GM12878 (cell line): ENCODE measurements at regions of chr16 and their contacts with region 1.

Region 1: GRCh38 chr16:69465083-69465721 is 40.8 kb downstream of the CYB5B start:
- DNase-seq: peak; percentile 59
- ATAC-seq: peak; percentile 67
- H3K4me3 ChIP-seq: no peak overlapping the region
- H3K27ac ChIP-seq: peak overlapping the region; percentile 12
- H3K4me1 ChIP-seq: peaks cover 55% of the 10 kb centered on the region
- H3K27me3 ChIP-seq: no peaks in the 10 kb centered on the region
- CTCF ChIP-seq: peak in 1 of 3 experiments; percentile 5; a peak in 1 of 6 replicates
- EP300 ChIP-seq: peak in 1 of 2 experiments; percentile 53; a peak in 1 of 4 replicates
- POLR2A ChIP-seq: no peak
- RAD21 ChIP-seq: peak; percentile 35; the same call in 1 of the 2 replicates

Region 2: DNA sequence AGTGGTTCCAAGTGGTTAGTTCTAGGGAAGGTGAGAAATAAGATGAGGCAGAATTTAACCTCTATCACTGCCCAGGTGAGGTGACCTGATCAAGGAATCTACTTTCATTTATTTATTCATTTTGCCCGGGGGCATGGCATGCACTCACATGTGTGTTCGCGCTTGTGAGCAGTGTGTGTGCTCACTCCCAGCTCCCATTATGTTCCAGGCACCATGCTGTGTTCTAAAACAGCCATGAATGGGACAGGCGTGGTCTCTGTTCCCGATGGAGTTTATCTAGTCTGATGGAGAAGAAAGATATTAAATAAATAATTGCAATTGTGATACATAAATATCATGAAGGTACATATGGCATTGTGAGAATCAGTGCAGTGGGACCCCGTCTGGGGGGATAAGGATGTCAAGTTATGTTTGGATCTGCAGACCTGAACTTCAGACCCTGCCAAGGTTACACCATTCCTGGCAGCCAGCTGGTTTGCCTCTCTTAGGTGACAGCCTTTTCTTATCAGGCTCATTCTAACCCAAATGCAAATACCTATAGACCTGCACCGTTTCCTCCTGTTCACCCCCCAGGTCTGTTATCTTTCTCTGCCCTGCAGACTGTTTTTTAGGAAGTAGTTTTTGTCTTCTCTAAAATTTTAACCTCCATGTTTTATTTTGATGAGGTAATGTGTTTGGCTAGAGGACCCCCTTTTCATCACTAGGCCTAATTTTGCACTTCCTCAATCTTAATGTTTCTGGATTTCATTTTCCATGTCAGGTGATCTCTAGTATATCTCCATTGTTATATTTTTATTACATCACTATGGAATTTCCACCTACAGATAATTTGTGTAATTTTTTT is 29.0 kb before region 1 on chr16:
- CTCF ChIA-PET with region 1: interaction called, 3 read pairs
- POLR2A ChIA-PET with region 1: interaction called, 4 read pairs
- RAD21 ChIA-PET with region 1: interaction called, 15 read pairs
- SMC1A ChIA-PET with region 1: interaction called, 14 read pairs
- in situ Hi-C with region 1: no loop called
- intact Hi-C with region 1: loop called (anchors 5 kb)
- DNase-seq: no peak
- ATAC-seq: peak; percentile 34
- H3K4me3 ChIP-seq: no peak overlapping the region
- H3K27ac ChIP-seq: no peak overlapping the region
- H3K4me1 ChIP-seq: peaks cover 39% of the 10 kb centered on the region
- H3K27me3 ChIP-seq: no peaks in the 10 kb centered on the region
- CTCF ChIP-seq: no peak
- EP300 ChIP-seq: no peak
- POLR2A ChIP-seq: no peak
- RAD21 ChIP-seq: no peak

Region 3: DNA sequence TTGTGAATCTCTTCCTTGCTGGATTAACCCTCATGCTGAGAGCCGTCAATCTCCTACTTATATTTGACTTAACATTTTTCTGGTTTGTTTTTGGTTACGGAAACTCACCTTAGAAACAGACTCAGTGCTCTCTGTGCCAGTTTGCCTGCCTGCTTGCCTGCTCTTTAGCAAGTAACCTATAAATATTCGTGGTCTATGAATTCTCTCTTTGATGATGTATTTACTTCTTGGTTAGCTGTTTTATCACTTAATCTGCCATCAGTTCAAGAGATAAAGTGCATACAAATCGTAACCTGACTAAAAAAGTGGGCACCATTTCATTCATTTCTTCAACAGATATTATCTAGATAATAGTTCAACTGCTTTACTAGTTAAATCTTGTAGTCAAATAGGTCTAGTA is 14.0 kb before region 1 on chr16:
- CTCF ChIA-PET with region 1: interaction called, 18 read pairs
- POLR2A ChIA-PET with region 1: interaction called, 9 read pairs
- RAD21 ChIA-PET with region 1: interaction called, 3 read pairs
- SMC1A ChIA-PET with region 1: interaction called, 33 read pairs
- in situ Hi-C with region 1: no loop called
- intact Hi-C with region 1: no loop called
- DNase-seq: no peak
- ATAC-seq: no peak
- H3K4me3 ChIP-seq: no peak overlapping the region
- H3K27ac ChIP-seq: no peak overlapping the region
- H3K4me1 ChIP-seq: no peaks in the 10 kb centered on the region
- H3K27me3 ChIP-seq: no peaks in the 10 kb centered on the region
- CTCF ChIP-seq: no peak
- EP300 ChIP-seq: no peak
- POLR2A ChIP-seq: no peak
- RAD21 ChIP-seq: no peak

Region 4: GRCh38 chr16:69520800-69521602 is 55.8 kb after region 1 on chr16:
- CTCF ChIA-PET with region 1: interaction called, 5 read pairs
- POLR2A ChIA-PET with region 1: interaction called, 4 read pairs
- RAD21 ChIA-PET with region 1: interaction called, 8 read pairs
- SMC1A ChIA-PET with region 1: interaction called, 4 read pairs
- in situ Hi-C with region 1: no loop called
- intact Hi-C with region 1: loop called (anchors 5 kb)
- DNase-seq: peak; percentile 65
- ATAC-seq: peak; percentile 85
- H3K4me3 ChIP-seq: 0 out of 2 replicates have a peak overlapping the region, but pooled peaks have one; percentile 16
- H3K27ac ChIP-seq: peak overlapping the region; percentile 77
- H3K4me1 ChIP-seq: peaks cover 26% of the 10 kb centered on the region
- H3K27me3 ChIP-seq: no peaks in the 10 kb centered on the region
- CTCF ChIP-seq: no peak
- EP300 ChIP-seq: 0 out of 4 replicates have a peak, but pooled peaks of 1 of the 2 experiments have one; percentile 6
- POLR2A ChIP-seq: no peak
- RAD21 ChIP-seq: no peak

Region 5: GRCh38 chr16:69535123-69536050 is 70.2 kb after region 1 on chr16:
- CTCF ChIA-PET with region 1: no interaction called
- POLR2A ChIA-PET with region 1: no interaction called
- RAD21 ChIA-PET with region 1: interaction called, 3 read pairs
- SMC1A ChIA-PET with region 1: interaction called, 5 read pairs
- in situ Hi-C with region 1: no loop called
- intact Hi-C with region 1: loop called (anchors 5 kb)
- DNase-seq: no peak
- ATAC-seq: no peak
- H3K4me3 ChIP-seq: no peak overlapping the region
- H3K27ac ChIP-seq: no peak overlapping the region
- H3K4me1 ChIP-seq: peaks cover 5% of the 10 kb centered on the region
- H3K27me3 ChIP-seq: no peaks in the 10 kb centered on the region
- CTCF ChIP-seq: no peak
- EP300 ChIP-seq: no peak
- POLR2A ChIP-seq: no peak
- RAD21 ChIP-seq: no peak